HepG2 (cell line): ENCODE measurements at regions of chr2 and their contacts with region 1.

Region 1: GRCh38 chr2:38665854-38666555 is at the start of gene GALM:
- DNase-seq: peak; percentile 99
- ATAC-seq: peak; percentile 94
- H3K4me3 ChIP-seq: peak within 1 kb of the TSS; percentile 70 to 90 (median 85)
- H3K27ac ChIP-seq: peak within 1 kb of the TSS; percentile 88
- H3K4me1 ChIP-seq: peaks cover 52% of the 10 kb centered on the region
- H3K27me3 ChIP-seq: no peaks in the 10 kb centered on the region; a peak in 1 of 5 replicates
- CTCF ChIP-seq: 0 out of 2 replicates have a peak, but pooled peaks have one; percentile 15
- EP300 ChIP-seq: peak in 1 of 2 experiments; percentile 24; a peak in 2 of 4 replicates
- POLR2A ChIP-seq: peak; percentile 93 to 99
- RAD21 ChIP-seq: no peak
- total RNA-seq, gene GALM: 90.0 and 114 TPM in 2 replicates

Region 2: DNA sequence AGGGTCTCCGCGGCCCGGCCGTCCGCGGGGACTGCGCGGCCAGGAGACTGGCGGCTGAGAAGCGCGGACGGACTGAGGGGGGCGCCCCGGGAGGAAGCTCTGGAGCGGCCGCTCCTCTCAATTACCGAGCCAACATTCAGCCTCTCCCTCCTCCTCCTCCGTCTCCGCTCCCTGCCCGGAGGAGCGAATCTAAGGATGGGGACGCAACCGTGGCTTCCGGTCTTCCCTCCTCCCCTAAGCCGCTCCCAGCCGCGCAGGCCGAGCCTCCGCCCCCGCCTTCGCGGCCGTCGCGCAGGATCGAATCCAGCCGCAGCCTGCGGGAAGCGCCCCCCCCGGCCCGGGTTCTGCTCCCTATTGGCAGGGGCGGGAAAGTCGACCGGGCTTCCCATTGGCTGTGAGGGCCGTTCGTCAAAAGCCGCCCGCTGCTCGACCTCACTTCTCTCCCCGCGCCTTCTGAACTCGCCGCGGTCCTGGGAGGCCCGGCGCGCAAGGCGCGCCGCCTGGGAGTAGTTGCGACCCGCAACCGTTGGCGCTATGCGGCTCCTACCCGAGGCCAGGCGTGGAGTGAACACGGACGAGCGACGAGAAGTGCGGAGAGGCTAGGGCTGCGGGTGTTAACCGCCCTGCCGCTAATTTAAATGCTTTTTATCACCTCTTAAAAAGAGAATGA is 63.1 kb before region 1 on chr2 and contains the start of gene HNRNPLL:
- CTCF ChIA-PET with region 1: interaction called, 9 read pairs
- POLR2A ChIA-PET with region 1: interaction called, 48 read pairs
- in situ Hi-C with region 1: loop called (anchors 5 kb)
- intact Hi-C with region 1: loop called (anchors 1 kb)
- DNase-seq: peak; percentile 96
- ATAC-seq: peak; percentile 90
- H3K4me3 ChIP-seq: peak within 1 kb of the TSS; percentile 95 to 98 (median 97)
- H3K27ac ChIP-seq: peak within 1 kb of the TSS; percentile 92
- H3K4me1 ChIP-seq: peaks cover 47% of the 10 kb centered on the region
- H3K27me3 ChIP-seq: no peaks in the 10 kb centered on the region; a peak in 2 of 5 replicates
- CTCF ChIP-seq: peak; percentile 18; the same call in 1 of the 2 replicates
- EP300 ChIP-seq: no peak
- POLR2A ChIP-seq: peak; percentile 97
- RAD21 ChIP-seq: peak; percentile 40
- total RNA-seq, gene HNRNPLL: 91.9 and 103 TPM in 2 replicates

Region 3: DNA sequence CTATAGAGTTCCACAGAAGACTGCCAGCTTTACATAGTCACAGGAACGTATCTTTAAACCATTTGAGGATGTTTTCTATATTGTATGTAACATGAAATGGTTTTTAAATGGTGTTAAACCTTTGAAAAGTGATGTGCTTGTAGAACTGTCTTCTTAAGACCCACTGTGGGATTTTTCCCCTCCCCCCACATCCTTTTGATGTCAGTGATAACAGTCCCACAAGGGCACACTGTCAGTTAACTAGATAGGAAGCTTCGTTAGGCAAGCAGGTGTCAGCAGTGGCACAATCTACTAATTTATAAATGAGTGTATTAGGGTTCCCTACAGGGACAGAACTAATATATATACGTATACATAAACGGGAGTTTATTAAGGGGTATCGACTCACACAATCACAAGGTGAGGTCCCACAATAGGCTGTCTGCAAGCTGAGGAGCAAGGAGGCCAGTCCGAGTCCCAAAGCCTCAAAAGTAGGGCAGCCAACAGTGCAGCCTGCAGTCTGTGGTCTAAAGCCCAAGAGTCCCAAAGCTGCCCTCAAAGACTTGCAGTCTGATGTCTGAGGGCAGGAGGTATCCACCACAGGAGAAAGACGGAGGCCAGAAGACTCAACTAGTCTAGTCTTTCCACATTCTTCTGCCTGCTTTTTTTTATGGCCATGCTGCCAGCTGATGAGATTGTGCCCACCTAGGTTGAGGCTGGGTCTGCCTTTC is 39.5 kb before region 1 on chr2:
- CTCF ChIA-PET with region 1: no interaction called
- POLR2A ChIA-PET with region 1: interaction called, 7 read pairs
- in situ Hi-C with region 1: no loop called
- intact Hi-C with region 1: loop called (anchors 2 kb)
- DNase-seq: no peak
- ATAC-seq: peak; percentile 19; the same call in 2 of the 3 replicates
- H3K4me3 ChIP-seq: no peak overlapping the region
- H3K27ac ChIP-seq: no peak overlapping the region
- H3K4me1 ChIP-seq: peaks cover 52% of the 10 kb centered on the region
- H3K27me3 ChIP-seq: no peaks in the 10 kb centered on the region
- CTCF ChIP-seq: no peak
- EP300 ChIP-seq: no peak
- POLR2A ChIP-seq: no peak
- RAD21 ChIP-seq: no peak

Region 4: GRCh38 chr2:38676681-38677080 is 10.7 kb after region 1 on chr2:
- CTCF ChIA-PET with region 1: no interaction called
- POLR2A ChIA-PET with region 1: interaction called, 25 read pairs
- in situ Hi-C with region 1: no loop called
- intact Hi-C with region 1: no loop called
- DNase-seq: no peak
- ATAC-seq: no peak
- H3K4me3 ChIP-seq: no peak overlapping the region
- H3K27ac ChIP-seq: peak overlapping the region; percentile 59
- H3K4me1 ChIP-seq: peaks cover 29% of the 10 kb centered on the region
- H3K27me3 ChIP-seq: no peaks in the 10 kb centered on the region
- CTCF ChIP-seq: no peak
- EP300 ChIP-seq: no peak
- POLR2A ChIP-seq: no peak
- RAD21 ChIP-seq: no peak

Region 5: DNA sequence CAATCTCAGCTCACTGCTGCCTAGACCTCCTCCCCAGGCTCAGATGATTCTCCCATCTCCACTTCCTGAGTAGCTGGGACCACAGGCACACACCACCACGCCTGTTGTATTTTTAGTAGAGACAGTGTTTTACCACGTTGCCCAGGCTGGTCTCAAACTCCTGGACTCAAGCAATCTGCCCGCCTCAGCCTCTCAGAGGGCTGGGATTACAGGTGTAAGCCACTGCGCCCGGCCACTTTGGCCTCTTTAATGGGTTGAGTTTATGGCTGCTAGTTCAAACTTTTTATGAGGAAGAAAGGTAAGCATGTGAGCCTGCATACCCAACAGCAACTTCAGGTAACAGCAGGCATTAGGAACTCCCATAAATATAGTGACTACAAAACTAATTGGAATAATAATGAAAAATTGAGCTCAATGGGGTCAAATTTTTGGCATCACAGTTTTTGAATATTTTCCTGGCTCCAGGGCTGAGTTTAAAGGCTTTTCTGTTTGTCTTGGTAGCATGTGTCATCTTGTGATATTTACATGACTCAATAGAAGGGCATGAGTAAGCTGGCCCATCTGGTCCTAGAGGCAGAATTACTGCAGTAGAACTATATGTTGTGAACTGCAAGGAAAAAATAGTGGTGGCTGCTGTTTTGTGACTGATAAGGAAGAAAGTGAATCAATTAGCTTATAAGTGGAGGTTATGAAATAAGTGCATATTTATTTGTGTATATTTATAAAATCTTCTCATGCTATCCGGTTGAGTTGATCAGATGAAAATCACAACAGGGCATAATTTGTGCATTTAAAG is 24.7 kb after region 1 on chr2:
- CTCF ChIA-PET with region 1: no interaction called
- POLR2A ChIA-PET with region 1: interaction called, 14 read pairs
- in situ Hi-C with region 1: no loop called
- intact Hi-C with region 1: no loop called
- DNase-seq: peak; percentile 85
- ATAC-seq: peak; percentile 71
- H3K4me3 ChIP-seq: no peak overlapping the region
- H3K27ac ChIP-seq: peak overlapping the region; percentile 54
- H3K4me1 ChIP-seq: peaks cover 66% of the 10 kb centered on the region
- H3K27me3 ChIP-seq: no peaks in the 10 kb centered on the region
- CTCF ChIP-seq: no peak
- EP300 ChIP-seq: peak in 1 of 2 experiments; percentile 66; a peak in 2 of 4 replicates
- POLR2A ChIP-seq: no peak
- RAD21 ChIP-seq: no peak

Region 6: GRCh38 chr2:38734299-38735058 is 68.5 kb after region 1 on chr2:
- CTCF ChIA-PET with region 1: no interaction called
- POLR2A ChIA-PET with region 1: interaction called, 20 read pairs
- in situ Hi-C with region 1: no loop called
- intact Hi-C with region 1: no loop called
- DNase-seq: no peak
- ATAC-seq: no peak
- H3K4me3 ChIP-seq: no peak overlapping the region
- H3K27ac ChIP-seq: peak overlapping the region; percentile 40
- H3K4me1 ChIP-seq: peaks cover 66% of the 10 kb centered on the region
- H3K27me3 ChIP-seq: no peaks in the 10 kb centered on the region
- CTCF ChIP-seq: no peak
- EP300 ChIP-seq: no peak
- POLR2A ChIP-seq: no peak
- RAD21 ChIP-seq: no peak